Ascending aorta (tissue), 2 donors: ENCODE measurements at regions of chr12 and their contacts with region 1.

Region 1: DNA sequence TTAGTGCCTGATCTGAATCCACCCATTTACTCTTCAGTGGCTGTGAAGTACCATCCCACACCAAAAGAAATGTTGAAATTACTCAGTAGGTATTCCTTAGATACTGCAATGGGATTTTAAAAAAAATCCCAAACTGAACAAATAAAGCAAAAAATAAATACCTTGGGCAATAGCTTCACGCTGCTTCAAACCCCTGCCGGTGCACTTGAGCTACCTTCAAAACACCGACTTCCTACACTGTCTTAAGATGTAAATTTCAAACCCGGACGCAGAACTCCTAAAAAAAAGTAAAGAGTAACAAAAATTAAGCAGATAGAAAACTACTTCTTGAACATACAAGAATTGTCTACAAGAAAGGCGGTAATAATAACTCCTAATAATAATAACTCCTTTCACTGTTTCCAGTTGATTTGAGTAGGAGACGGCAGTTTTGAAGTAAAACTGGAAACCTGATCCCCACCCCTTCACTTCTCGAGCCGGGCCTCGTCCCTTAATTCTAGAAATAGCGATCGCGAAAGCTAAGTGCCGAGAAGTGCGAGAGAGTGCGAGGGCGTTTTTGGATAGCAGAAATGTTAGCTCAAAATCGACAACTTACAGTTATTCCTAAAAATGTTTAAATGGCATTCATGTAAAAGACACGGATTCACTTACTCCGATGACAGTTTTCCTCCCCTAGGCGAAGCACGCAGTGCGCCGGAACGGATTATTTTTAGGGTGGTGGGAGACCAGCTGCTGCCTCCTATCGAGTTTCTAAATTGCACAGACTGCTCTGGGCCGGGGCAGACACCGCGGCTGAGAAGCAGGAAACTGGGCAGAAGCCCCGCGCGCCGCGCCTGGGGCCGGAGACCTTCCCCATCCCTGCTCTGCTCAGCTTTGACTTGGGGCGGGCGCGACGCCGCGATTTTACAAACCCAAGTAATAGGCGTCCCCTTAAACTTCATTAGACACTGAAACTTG is at the start of gene ABCC9:
- DNase-seq: peak; percentile 12 to 69
- H3K4me3 ChIP-seq: peak within 1 kb of the TSS; percentile 58 to 61
- H3K27ac ChIP-seq: peak within 1 kb of the TSS; percentile 67 to 79
- H3K4me1 ChIP-seq: no peaks in the 10 kb centered on the region
- H3K27me3 ChIP-seq: no peaks in the 10 kb centered on the region
- CTCF ChIP-seq: peak in 1 of 3 experiments; percentile 7
- total RNA-seq, gene ABCC9: 19.8 TPM

Region 2: GRCh38 chr12:21828779-21829178 is 112.0 kb before region 1 on chr12:
- intact Hi-C with region 1: loop called (anchors 5 kb)
- DNase-seq: no peak
- H3K4me3 ChIP-seq: peak overlapping the region in 1 of 2 donors; percentile 42
- H3K27ac ChIP-seq: peak overlapping the region; percentile 20 to 38
- H3K4me1 ChIP-seq: peaks cover 0 to 4% of the 10 kb centered on the region in 2 donors
- H3K27me3 ChIP-seq: no peaks in the 10 kb centered on the region
- CTCF ChIP-seq: no peak

Region 3: GRCh38 chr12:21984375-21984774 is 43.5 kb after region 1 on chr12:
- intact Hi-C with region 1: loop called (anchors 5 kb)
- DNase-seq: no peak
- H3K4me3 ChIP-seq: no peak overlapping the region
- H3K27ac ChIP-seq: no peak overlapping the region
- H3K4me1 ChIP-seq: no peaks in the 10 kb centered on the region
- H3K27me3 ChIP-seq: no peaks in the 10 kb centered on the region
- CTCF ChIP-seq: no peak

Region 4: DNA sequence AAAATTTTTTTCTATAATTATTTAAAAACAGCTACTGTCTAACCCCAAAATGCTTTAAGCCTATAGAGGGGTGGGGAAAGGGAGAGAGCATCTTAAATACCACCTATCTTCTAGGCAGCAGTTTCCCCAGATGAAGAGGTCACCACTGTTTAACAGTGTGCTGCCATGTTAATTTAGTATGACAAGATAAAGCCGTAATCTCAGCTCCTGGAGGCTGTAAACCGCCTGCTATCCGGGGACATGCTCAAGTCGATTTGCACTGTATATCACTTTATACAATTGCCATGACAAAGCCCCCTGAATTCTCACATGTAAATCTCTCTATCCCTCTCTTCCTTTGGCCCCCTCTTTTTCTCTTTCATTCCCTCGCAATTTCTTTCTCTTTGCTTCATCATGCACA is 1940.2 kb after region 1 on chr12:
- intact Hi-C with region 1: no loop called
- DNase-seq: no peak
- H3K4me3 ChIP-seq: no peak overlapping the region
- H3K27ac ChIP-seq: no peak overlapping the region
- H3K4me1 ChIP-seq: no peaks in the 10 kb centered on the region
- H3K27me3 ChIP-seq: no peaks in the 10 kb centered on the region
- CTCF ChIP-seq: no peak